Dendritic cell treated with granulocyte-macrophage colony-stimulating factor and Interleukin-4, amounts not matched to agents 40 ng/mL and 50 ng/mL, for 4 days (primary cell): ENCODE measurements at regions of chr14 and their contacts with region 1.

Region 1: GRCh38 chr14:77554207-77554606 is 55.6 kb upstream of the ISM2 start:
- H3K4me3 Mint-ChIP-seq: no peak overlapping the region
- H3K27ac Mint-ChIP-seq: no peak overlapping the region
- H3K4me1 Mint-ChIP-seq: no peaks in the 10 kb centered on the region
- H3K27me3 Mint-ChIP-seq: no peaks in the 10 kb centered on the region

Region 2: DNA sequence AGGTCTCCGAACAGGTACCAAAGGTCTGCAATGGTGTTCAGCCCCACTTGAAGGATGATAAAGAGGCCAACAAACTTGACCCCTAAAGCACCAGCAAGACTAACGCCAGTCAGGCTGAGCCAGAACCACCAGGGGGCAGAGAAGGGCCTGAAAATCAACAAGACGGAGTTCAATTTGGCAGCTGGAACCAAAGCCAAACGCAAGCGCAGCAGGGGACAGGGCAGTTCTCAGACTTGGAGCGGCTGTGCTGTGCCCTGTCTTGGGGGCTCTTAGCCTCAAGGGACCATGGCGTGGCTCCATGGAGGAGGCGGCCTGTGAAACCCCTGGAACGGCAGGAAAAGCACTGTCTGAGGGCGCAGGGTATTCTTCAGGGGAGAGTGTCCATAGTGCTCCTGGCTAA is 253.1 kb before region 1 on chr14:
- intact Hi-C with region 1: loop called (anchors 2 kb)
- H3K4me3 Mint-ChIP-seq: no peak overlapping the region
- H3K27ac Mint-ChIP-seq: no peak overlapping the region
- H3K4me1 Mint-ChIP-seq: peaks cover 28% of the 10 kb centered on the region
- H3K27me3 Mint-ChIP-seq: no peaks in the 10 kb centered on the region